ENCODE measurements at regions of chr10 and their contacts with region 1.

Region 1: DNA sequence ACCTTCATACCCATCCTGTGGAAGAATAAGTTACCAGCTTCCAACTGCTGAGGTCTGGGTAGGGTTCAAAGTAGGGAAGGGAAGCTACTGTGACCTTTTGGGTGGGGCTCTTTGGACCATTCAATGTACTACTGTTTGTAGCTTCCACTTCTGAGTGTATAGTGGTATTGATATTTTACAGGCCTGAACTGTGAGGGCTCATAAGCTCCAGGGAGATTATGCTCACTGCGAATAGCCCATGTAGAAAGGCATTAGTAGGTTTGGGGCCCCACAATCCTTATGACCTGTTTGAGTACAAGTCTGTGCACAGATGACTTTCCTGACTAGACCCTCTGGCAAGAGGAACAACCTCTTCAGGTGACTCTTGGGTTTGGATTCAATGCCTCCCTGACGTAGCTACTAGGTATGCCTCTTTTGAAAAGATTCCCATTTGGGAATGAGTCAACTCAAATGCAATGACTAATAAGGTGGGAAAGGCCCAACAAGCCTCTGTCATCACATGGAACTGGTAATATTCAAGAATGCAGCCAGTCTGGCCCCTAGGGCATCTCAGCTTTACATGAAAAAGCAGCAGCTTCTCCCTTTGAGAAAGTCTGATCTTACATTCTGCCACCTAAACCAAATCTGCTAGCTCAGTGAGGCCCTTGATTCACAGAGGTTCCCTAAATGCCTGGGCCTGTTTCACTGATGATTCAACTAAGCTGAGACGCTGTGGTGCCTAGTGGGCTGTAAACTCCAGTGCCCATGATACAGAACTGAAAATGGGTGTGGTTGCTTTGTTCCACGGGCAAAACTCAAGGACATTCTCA is 79.8 kb downstream of the ABI1 start:
- DNase-seq: peak; percentile 66
- H3K4me3 Mint-ChIP-seq: peak overlapping the region; percentile 21
- H3K27ac Mint-ChIP-seq: peak overlapping the region; percentile 82
- H3K4me1 Mint-ChIP-seq: peaks cover 81% of the 10 kb centered on the region
- H3K27me3 Mint-ChIP-seq: no peaks in the 10 kb centered on the region

Region 2: DNA sequence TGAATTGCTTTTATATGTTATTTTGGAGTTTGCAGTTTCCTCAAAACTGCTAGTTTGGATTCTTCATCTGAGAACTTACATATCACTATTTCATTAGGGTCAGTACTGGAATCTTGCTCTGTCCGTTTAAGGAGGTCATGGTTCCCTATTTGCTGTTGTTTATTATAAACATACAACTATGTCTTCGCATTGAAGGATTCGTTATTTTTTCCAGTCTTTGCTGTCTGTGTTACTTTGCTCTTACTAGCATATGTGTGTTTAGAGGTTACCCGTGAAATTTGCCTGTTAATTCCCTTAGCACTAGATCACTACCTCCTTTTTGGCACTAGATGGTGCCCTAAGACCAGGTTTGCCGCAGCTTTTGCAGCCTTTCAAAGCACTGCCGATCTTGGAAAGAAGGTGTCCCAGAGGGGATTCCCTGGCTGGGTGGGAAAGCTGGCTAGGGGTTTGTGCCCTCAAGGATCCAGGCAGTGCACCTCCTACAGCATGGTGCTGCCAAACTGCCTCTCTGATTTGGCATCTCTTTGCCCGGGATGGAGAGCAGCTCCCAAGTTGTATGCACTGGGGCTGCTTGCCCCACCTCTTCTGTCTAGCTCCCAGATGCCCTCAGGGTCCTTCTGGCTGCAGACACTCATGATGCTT is 445.9 kb before region 1 on chr10:
- CTCF ChIA-PET with region 1: no interaction called
- POLR2A ChIA-PET with region 1: no interaction called
- intact Hi-C with region 1: no loop called
- DNase-seq: peak; percentile 73
- H3K4me3 Mint-ChIP-seq: peak overlapping the region; percentile 67
- H3K27ac Mint-ChIP-seq: peak overlapping the region; percentile 36
- H3K4me1 Mint-ChIP-seq: peaks cover 6% of the 10 kb centered on the region
- H3K27me3 Mint-ChIP-seq: no peaks in the 10 kb centered on the region

Region 3: DNA sequence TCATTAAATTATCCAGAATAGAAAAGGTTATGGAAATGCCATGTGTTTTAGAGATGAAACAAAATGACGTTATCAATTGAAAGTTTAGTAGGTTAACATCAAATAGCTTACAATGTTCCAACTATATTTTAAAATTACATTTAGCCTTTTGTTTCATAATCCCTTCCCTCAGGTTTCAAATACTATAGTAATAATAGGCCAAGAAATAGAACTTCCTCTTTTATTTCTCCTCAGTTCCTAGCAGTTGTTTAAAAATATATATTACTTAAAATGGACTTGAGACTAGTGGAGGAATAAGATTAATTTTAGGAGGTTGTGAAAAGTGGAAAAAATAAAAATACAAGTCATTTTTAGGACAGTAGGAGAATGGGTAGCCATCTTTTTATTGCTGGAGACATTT is 99.9 kb before region 1 on chr10:
- CTCF ChIA-PET with region 1: no interaction called
- POLR2A ChIA-PET with region 1: no interaction called
- intact Hi-C with region 1: no loop called
- DNase-seq: no peak
- H3K4me3 Mint-ChIP-seq: no peak overlapping the region
- H3K27ac Mint-ChIP-seq: no peak overlapping the region
- H3K4me1 Mint-ChIP-seq: peaks cover 19% of the 10 kb centered on the region
- H3K27me3 Mint-ChIP-seq: peaks cover 2% of the 10 kb centered on the region

Region 4: GRCh38 chr10:26755443-26755903 is 25.5 kb before region 1 on chr10:
- CTCF ChIA-PET with region 1: interaction called, 4 read pairs
- POLR2A ChIA-PET with region 1: no interaction called
- intact Hi-C with region 1: loop called (anchors 2 kb)
- DNase-seq: no peak
- H3K4me3 Mint-ChIP-seq: no peak overlapping the region
- H3K27ac Mint-ChIP-seq: peak overlapping the region; percentile 43
- H3K4me1 Mint-ChIP-seq: peaks cover 6% of the 10 kb centered on the region
- H3K27me3 Mint-ChIP-seq: no peaks in the 10 kb centered on the region

Region 5: GRCh38 chr10:26805567-26806245 is 24.7 kb after region 1 on chr10:
- CTCF ChIA-PET with region 1: interaction called, 5 read pairs
- POLR2A ChIA-PET with region 1: interaction called, 5 read pairs
- intact Hi-C with region 1: loop called (anchors 1 kb)
- DNase-seq: no peak
- H3K4me3 Mint-ChIP-seq: no peak overlapping the region
- H3K27ac Mint-ChIP-seq: no peak overlapping the region
- H3K4me1 Mint-ChIP-seq: peaks cover 73% of the 10 kb centered on the region
- H3K27me3 Mint-ChIP-seq: no peaks in the 10 kb centered on the region

Region 6: GRCh38 chr10:26821699-26822570 is 40.9 kb after region 1 on chr10:
- CTCF ChIA-PET with region 1: interaction called, 3 read pairs
- POLR2A ChIA-PET with region 1: no interaction called
- intact Hi-C with region 1: loop called (anchors 5 kb)
- DNase-seq: no peak
- H3K4me3 Mint-ChIP-seq: no peak overlapping the region
- H3K27ac Mint-ChIP-seq: peak overlapping the region; percentile 53
- H3K4me1 Mint-ChIP-seq: peaks cover 59% of the 10 kb centered on the region
- H3K27me3 Mint-ChIP-seq: no peaks in the 10 kb centered on the region

Region 7: DNA sequence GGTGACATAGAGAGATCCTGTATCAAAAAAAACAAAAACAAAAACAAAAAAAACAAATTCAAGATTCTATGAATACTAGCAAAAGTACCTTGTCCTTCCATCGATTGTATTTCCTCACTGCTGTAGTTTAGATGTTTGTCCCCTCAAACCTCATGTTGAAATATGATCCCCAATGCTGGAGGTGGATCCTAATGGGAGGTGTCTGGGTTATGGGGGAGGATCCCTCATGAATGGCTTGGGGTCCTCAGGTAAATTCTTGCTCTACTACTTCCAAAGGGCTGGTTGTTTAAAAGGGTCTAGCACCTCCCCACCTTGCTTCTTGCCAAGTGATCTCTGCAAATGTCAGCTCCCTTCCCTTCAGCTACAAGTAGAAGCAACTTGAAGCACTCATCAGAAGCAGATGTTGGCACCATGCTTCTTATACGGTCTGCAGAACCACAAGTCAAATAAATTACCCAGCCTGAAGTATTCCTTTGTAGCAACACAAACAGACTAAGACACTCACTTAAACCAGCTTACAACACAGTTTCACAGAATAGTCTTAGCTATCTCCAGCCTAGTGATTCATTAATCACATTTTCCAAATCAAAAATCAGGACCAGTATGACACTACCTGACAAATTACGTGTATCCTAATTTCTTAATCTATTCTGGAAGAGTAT is 59.1 kb after region 1 on chr10:
- CTCF ChIA-PET with region 1: no interaction called
- POLR2A ChIA-PET with region 1: interaction called, 3 read pairs
- intact Hi-C with region 1: loop called (anchors 5 kb)
- DNase-seq: no peak
- H3K4me3 Mint-ChIP-seq: no peak overlapping the region
- H3K27ac Mint-ChIP-seq: peak overlapping the region; percentile 30
- H3K4me1 Mint-ChIP-seq: peaks cover 69% of the 10 kb centered on the region
- H3K27me3 Mint-ChIP-seq: no peaks in the 10 kb centered on the region

Region 8: DNA sequence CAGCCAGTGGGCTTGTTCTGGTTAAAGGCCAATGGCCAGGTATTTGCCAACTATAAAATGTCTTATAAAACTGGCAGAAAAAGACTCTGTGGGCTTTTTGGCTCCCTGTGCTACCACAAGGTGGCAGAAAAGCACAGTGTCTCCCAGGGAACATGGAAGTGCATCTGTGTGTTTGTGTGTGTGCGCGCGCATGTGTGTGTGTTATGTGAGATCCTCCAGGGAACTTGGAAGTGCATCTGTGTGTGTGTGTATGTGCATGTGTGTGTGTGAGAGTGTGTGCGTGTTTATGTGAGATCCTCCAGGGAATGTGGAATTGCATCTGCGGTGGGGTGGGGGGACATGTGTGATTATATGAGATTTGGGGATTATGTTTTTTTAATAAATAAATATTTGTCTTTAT is 110.0 kb after region 1 on chr10:
- CTCF ChIA-PET with region 1: no interaction called
- POLR2A ChIA-PET with region 1: no interaction called
- intact Hi-C with region 1: no loop called
- DNase-seq: peak; percentile 66
- H3K4me3 Mint-ChIP-seq: no peak overlapping the region
- H3K27ac Mint-ChIP-seq: no peak overlapping the region
- H3K4me1 Mint-ChIP-seq: no peaks in the 10 kb centered on the region
- H3K27me3 Mint-ChIP-seq: peaks cover 6% of the 10 kb centered on the region

Region 9: DNA sequence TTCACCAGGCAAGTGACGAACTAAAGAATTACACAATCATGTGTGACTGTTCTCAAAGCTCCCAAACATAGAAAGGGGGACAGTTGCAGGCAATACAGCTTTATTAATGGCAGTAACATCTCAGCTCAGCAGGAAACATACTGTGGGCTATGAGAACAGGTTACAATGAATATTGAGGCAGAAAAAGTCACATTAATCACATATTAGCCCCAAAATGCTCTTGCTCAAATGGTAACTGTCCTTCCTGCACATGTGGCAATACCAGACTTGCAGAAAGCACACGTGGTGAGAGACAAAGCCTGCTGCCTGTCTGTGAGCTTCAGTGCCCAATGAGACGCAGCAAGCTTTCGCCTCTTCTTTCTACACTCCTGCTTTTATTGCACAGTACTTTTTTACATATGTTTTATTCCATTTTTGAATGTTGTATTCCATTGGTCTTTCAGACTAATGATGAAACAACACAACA is 564.5 kb after region 1 on chr10:
- CTCF ChIA-PET with region 1: no interaction called
- POLR2A ChIA-PET with region 1: no interaction called
- intact Hi-C with region 1: loop called (anchors 1 kb)
- DNase-seq: no peak
- H3K4me3 Mint-ChIP-seq: no peak overlapping the region
- H3K27ac Mint-ChIP-seq: peak overlapping the region; percentile 65
- H3K4me1 Mint-ChIP-seq: peaks cover 29% of the 10 kb centered on the region
- H3K27me3 Mint-ChIP-seq: peaks cover 11% of the 10 kb centered on the region